ENCODE measurements at regions of chr3 and their contacts with region 1.

Region 1: GRCh38 chr3:49839193-49839809 is 17.1 kb downstream of the TRAIP start:
- DNase-seq: peak; percentile 92
- H3K4me3 ChIP-seq: no peak overlapping the region
- H3K27ac ChIP-seq: no peak overlapping the region
- H3K4me1 ChIP-seq: peaks cover 0 to 9% (median 7%) of the 10 kb centered on the region in 6 donors
- H3K27me3 ChIP-seq: no peaks in the 10 kb centered on the region
- CTCF ChIP-seq: peak; percentile 73 to 96 (median 91)
- POLR2A ChIP-seq: no peak

Region 2: GRCh38 chr3:48974076-48974864 is 865.0 kb before region 1 on chr3:
- intact Hi-C with region 1: no loop called
- DNase-seq: no peak
- H3K4me3 ChIP-seq: no peak overlapping the region
- H3K27ac ChIP-seq: no peak overlapping the region
- H3K4me1 ChIP-seq: no peaks in the 10 kb centered on the region
- H3K27me3 ChIP-seq: no peaks in the 10 kb centered on the region
- CTCF ChIP-seq: no peak
- POLR2A ChIP-seq: no peak

Region 3: GRCh38 chr3:49703443-49703927 is 135.8 kb before region 1 on chr3:
- intact Hi-C with region 1: loop called (anchors 5 kb)
- DNase-seq: peak; percentile 87
- H3K4me3 ChIP-seq: no peak overlapping the region
- H3K27ac ChIP-seq: peak overlapping the region in 2 of 8 donors; percentile 31 to 46
- H3K4me1 ChIP-seq: peaks cover 0 to 38% (median 9%) of the 10 kb centered on the region in 6 donors
- H3K27me3 ChIP-seq: no peaks in the 10 kb centered on the region
- CTCF ChIP-seq: peak; percentile 71 to 95 (median 86)
- POLR2A ChIP-seq: no peak

Region 4: GRCh38 chr3:49802719-49803464 is 36.4 kb before region 1 on chr3 and contains the start of gene INKA1:
- intact Hi-C with region 1: loop called (anchors 5 kb)
- DNase-seq: peak; percentile 99
- H3K4me3 ChIP-seq: peak within 1 kb of the TSS; percentile 76 to 97 (median 88)
- H3K27ac ChIP-seq: peak within 1 kb of the TSS; percentile 82 to 97 (median 93)
- H3K4me1 ChIP-seq: peaks cover 41 to 58% (median 51%) of the 10 kb centered on the region in 6 donors
- H3K27me3 ChIP-seq: no peaks in the 10 kb centered on the region
- CTCF ChIP-seq: peak in 9 of 11 experiments; percentile 3 to 97 (median 94)
- POLR2A ChIP-seq: peak in 1 of 3 donors; percentile 39
- total RNA-seq, gene INKA1: 2.8 to 14.9 (median 7.5) TPM

Measured in spleen (tissue), 13 donors.